Mammary epithelial cell (primary cell): ENCODE measurements at regions of chr4 and their contacts with region 1.

Region 1: GRCh38 chr4:169566021-169566818 is 46.2 kb downstream of the NEK1 start:
- DNase-seq: peak; percentile 40
- H3K4me3 ChIP-seq: no peak overlapping the region
- H3K27ac ChIP-seq: no peak overlapping the region
- H3K4me1 ChIP-seq: peaks cover 2% of the 10 kb centered on the region
- H3K27me3 ChIP-seq: no peaks in the 10 kb centered on the region
- CTCF ChIP-seq: peak; percentile 66 to 70

Region 2: DNA sequence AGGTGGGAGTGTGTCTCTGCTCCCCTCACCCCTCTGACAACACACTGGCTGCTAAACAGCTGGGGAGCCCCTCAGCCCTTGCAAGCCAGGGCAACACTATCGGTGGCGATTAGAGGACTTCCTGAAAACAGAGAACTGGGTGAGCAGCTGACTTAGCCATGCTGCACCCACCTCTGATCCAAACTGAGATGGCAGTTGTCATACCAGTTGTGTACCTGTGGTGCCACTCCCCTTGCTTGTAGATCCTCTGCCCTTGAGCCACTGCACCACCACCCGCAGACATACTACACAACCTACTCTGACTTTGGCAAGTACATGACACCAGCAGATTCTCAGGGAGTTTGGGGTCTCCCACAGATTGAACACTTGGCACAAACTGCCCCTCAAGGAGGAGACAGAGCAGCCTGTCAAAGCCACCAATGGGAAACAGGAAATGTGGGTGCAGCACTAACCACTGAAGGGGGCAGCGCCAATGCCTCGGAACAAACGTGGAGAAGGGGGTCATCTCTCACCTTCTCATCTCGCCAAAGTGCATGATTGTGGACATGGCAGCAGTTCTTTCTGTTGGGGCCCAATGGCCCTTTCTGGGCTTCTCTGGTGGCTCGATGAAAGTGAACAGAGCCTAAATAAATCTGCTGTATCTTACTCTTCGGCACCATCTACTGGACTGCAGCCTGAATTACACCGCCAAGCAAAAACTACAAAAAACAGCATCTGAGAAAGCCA is 73.6 kb before region 1 on chr4:
- CTCF ChIA-PET with region 1: no interaction called
- dilution Hi-C with region 1: no loop called
- in situ Hi-C with region 1: no loop called
- intact Hi-C with region 1: loop called (anchors 2 kb)
- DNase-seq: peak; percentile 21
- H3K4me3 ChIP-seq: no peak overlapping the region
- H3K27ac ChIP-seq: no peak overlapping the region
- H3K4me1 ChIP-seq: no peaks in the 10 kb centered on the region
- H3K27me3 ChIP-seq: no peaks in the 10 kb centered on the region
- CTCF ChIP-seq: peak; percentile 80 to 81